B cell (primary cell): ENCODE measurements at regions of chr11 and their contacts with region 1.

Region 1: GRCh38 chr11:2298795-2299761 is 2.6 kb downstream of the C11orf21 start:
- DNase-seq: peak; percentile 52
- ATAC-seq: no peak
- H3K4me3 ChIP-seq: peak overlapping the region in 2 of 5 experiments; percentile 21 to 44
- H3K4me3 Mint-ChIP-seq: peak overlapping the region; percentile 50
- H3K27ac ChIP-seq: peak overlapping the region in 1 of 2 donors; percentile 37
- H3K27ac Mint-ChIP-seq: peak overlapping the region; percentile 88
- H3K4me1 ChIP-seq: peaks cover 51 to 57% of the 10 kb centered on the region in 2 donors
- H3K4me1 Mint-ChIP-seq: peaks cover 58% of the 10 kb centered on the region
- H3K27me3 ChIP-seq: no peaks in the 10 kb centered on the region
- H3K27me3 Mint-ChIP-seq: no peaks in the 10 kb centered on the region
- CTCF ChIP-seq: no peak

Region 2: DNA sequence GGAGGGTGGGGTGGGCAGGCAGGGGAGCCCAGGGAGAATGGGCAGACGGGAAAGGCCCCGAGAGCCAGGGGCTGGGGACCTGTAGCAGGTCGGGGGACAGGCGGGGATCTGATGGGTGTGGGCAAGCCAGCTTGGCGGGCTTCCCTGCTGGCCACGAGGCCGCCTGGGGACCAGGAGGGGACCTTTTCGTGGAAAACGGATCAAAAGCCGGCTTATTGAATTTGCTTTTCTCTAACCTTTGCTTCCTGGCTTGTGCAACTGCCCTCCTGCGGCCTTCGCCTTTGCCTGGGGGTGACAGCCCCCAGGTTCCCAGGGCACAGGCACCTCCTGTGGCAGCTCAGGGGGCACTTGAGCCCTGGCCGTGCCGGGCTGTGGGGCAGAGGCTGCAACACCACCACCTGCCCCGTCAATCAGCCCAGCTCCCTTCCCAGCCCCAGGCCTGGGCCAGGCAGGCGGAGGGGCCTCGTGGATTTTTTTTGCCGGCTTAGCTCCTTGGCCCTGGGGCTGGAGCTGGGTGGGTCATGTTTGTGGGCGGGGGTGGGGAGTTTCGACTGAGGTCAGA is 259.8 kb before region 1 on chr11:
- CTCF ChIA-PET with region 1: no interaction called
- POLR2A ChIA-PET with region 1: no interaction called
- intact Hi-C with region 1: no loop called
- DNase-seq: no peak
- ATAC-seq: no peak
- H3K4me3 ChIP-seq: no peak overlapping the region
- H3K4me3 Mint-ChIP-seq: no peak overlapping the region
- H3K27ac ChIP-seq: no peak overlapping the region
- H3K27ac Mint-ChIP-seq: no peak overlapping the region
- H3K4me1 ChIP-seq: no peaks in the 10 kb centered on the region
- H3K4me1 Mint-ChIP-seq: no peaks in the 10 kb centered on the region
- H3K27me3 ChIP-seq: no peaks in the 10 kb centered on the region
- H3K27me3 Mint-ChIP-seq: no peaks in the 10 kb centered on the region
- CTCF ChIP-seq: no peak

Region 3: GRCh38 chr11:2196970-2197770 is 101.9 kb before region 1 on chr11:
- CTCF ChIA-PET with region 1: interaction called, 68 read pairs
- POLR2A ChIA-PET with region 1: interaction called, 3 read pairs
- intact Hi-C with region 1: loop called (anchors 1 kb)
- DNase-seq: peak; percentile 79
- ATAC-seq: peak; percentile 92
- H3K4me3 ChIP-seq: no peak overlapping the region
- H3K4me3 Mint-ChIP-seq: no peak overlapping the region
- H3K27ac ChIP-seq: no peak overlapping the region
- H3K27ac Mint-ChIP-seq: peak overlapping the region; percentile 34
- H3K4me1 ChIP-seq: peaks cover 0 to 18% of the 10 kb centered on the region in 2 donors
- H3K4me1 Mint-ChIP-seq: peaks cover 7% of the 10 kb centered on the region
- H3K27me3 ChIP-seq: peaks cover 0 to 11% (median 2%) of the 10 kb centered on the region in 4 experiments
- H3K27me3 Mint-ChIP-seq: peaks cover 14% of the 10 kb centered on the region
- CTCF ChIP-seq: peak; percentile 78

Region 4: DNA sequence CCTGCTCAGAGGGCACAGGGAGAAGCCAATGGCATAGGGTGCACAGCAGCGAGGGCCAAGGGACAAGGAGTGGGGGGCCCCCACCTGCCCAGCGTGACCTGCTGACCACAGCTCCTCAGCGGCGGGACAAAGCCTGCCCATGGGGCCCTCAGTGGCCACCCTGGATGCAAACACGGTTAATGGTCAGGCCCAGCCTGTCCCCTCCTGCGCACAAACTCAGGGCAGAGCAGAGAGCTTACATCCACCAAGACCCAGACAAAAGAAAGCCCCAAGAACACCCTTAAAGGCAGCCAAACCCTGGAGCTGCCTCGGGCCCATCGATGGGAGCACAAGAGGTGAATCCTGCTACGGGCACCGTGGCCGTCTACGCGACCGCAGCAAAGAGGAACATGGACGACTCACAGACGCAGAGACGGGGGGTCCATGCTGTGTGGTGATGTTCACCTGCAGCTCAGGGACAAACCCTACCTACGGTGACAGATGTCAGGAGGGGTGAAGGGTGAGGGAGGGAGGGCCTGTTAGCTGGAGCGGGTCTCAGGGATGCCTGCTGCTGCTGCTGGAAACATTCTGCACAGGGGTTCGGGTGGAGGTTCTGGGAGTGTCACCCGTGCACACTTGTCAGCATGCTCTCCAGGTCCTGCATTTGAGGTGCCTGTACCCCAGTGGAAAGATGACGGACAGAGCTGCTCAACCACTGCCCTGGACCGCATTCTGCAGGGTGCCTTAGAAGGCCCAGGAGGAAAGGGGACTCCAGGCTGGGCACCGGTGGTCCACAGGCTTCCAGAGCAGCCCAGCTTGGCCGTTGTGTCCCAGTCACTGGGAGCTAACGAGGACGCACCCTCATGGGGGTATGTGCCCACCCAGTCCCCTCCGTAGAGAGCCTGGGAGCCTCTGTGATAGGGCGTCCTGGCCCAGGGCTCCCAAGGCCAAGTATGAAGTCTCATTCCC is 40.3 kb before region 1 on chr11:
- CTCF ChIA-PET with region 1: no interaction called
- POLR2A ChIA-PET with region 1: no interaction called
- intact Hi-C with region 1: no loop called
- DNase-seq: no peak
- ATAC-seq: no peak
- H3K4me3 ChIP-seq: no peak overlapping the region
- H3K4me3 Mint-ChIP-seq: no peak overlapping the region
- H3K27ac ChIP-seq: no peak overlapping the region
- H3K27ac Mint-ChIP-seq: peak overlapping the region; percentile 41
- H3K4me1 ChIP-seq: no peaks in the 10 kb centered on the region
- H3K4me1 Mint-ChIP-seq: no peaks in the 10 kb centered on the region
- H3K27me3 ChIP-seq: no peaks in the 10 kb centered on the region
- H3K27me3 Mint-ChIP-seq: no peaks in the 10 kb centered on the region
- CTCF ChIP-seq: no peak

Region 5: DNA sequence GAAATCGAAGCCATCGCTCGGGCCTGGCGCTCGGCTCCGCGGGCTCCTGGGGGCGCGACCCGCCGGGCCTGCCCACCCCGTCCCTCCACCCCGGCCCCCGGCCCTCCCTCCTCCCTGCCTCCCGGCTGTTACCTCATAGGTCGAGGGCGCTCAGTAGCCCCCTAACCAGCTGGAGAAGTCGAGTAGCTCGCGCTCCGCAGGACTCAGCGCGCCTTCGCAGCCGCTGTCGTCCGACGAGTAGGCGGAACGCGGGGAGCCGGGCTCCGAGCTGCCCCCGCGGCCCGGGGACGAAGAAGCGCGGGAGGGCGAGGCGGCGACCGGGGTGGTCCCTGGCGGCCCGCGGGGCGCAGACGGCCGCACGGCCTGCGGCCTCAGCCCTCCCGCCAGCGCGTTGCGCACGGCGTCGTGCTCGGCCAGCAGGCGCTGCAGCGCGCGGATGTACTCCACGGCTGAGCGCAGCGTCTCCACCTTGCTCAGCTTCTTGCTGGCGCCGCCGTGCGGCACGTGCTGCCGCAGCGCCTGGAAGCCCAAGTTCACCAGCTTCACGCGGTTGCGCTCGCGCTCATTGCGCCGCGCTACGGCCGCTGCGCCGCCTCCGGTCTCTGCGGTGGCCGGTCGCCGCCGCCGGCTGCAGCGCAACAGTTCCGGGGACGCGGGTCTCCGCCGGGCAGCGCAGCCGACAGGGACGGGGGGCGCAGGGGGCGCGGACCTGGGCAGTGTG is 29.3 kb before region 1 on chr11:
- CTCF ChIA-PET with region 1: interaction called, 12 read pairs
- POLR2A ChIA-PET with region 1: interaction called, 3 read pairs
- intact Hi-C with region 1: loop called (anchors 1 kb)
- DNase-seq: peak; percentile 80
- ATAC-seq: peak; percentile 34
- H3K4me3 ChIP-seq: peak overlapping the region; percentile 31 to 75 (median 52)
- H3K4me3 Mint-ChIP-seq: peak overlapping the region; percentile 84
- H3K27ac ChIP-seq: no peak overlapping the region
- H3K27ac Mint-ChIP-seq: peak overlapping the region; percentile 84
- H3K4me1 ChIP-seq: peaks cover 38 to 48% of the 10 kb centered on the region in 2 donors
- H3K4me1 Mint-ChIP-seq: peaks cover 41% of the 10 kb centered on the region
- H3K27me3 ChIP-seq: peaks cover 0 to 31% (median 9%) of the 10 kb centered on the region in 4 experiments
- H3K27me3 Mint-ChIP-seq: peaks cover 2% of the 10 kb centered on the region
- CTCF ChIP-seq: peak; percentile 36

Region 6: GRCh38 chr11:2377511-2378443 is 78.7 kb after region 1 on chr11:
- CTCF ChIA-PET with region 1: interaction called, 59 read pairs
- POLR2A ChIA-PET with region 1: interaction called, 11 read pairs
- intact Hi-C with region 1: loop called (anchors 2 kb)
- DNase-seq: peak; percentile 73
- ATAC-seq: peak; percentile 42
- H3K4me3 ChIP-seq: peak overlapping the region; percentile 9 to 92 (median 79)
- H3K4me3 Mint-ChIP-seq: peak overlapping the region; percentile 89
- H3K27ac ChIP-seq: peak overlapping the region; percentile 50 to 86
- H3K27ac Mint-ChIP-seq: peak overlapping the region; percentile 82
- H3K4me1 ChIP-seq: peaks cover 50 to 55% of the 10 kb centered on the region in 2 donors
- H3K4me1 Mint-ChIP-seq: peaks cover 48% of the 10 kb centered on the region
- H3K27me3 ChIP-seq: no peaks in the 10 kb centered on the region
- H3K27me3 Mint-ChIP-seq: no peaks in the 10 kb centered on the region
- CTCF ChIP-seq: no peak

Region 7: GRCh38 chr11:2400069-2400760 is 101.1 kb after region 1 on chr11 and contains the start of gene TSSC4:
- CTCF ChIA-PET with region 1: interaction called, 78 read pairs
- POLR2A ChIA-PET with region 1: interaction called, 10 read pairs
- intact Hi-C with region 1: no loop called
- DNase-seq: peak; percentile 100
- ATAC-seq: peak; percentile 81
- H3K4me3 ChIP-seq: peak within 1 kb of the TSS; percentile 87 to 100 (median 95)
- H3K4me3 Mint-ChIP-seq: peak within 1 kb of the TSS; percentile 90
- H3K27ac ChIP-seq: peak within 1 kb of the TSS; percentile 91 to 93
- H3K27ac Mint-ChIP-seq: peak within 1 kb of the TSS; percentile 98
- H3K4me1 ChIP-seq: peaks cover 26 to 40% of the 10 kb centered on the region in 2 donors
- H3K4me1 Mint-ChIP-seq: peaks cover 25% of the 10 kb centered on the region
- H3K27me3 ChIP-seq: no peaks in the 10 kb centered on the region
- H3K27me3 Mint-ChIP-seq: no peaks in the 10 kb centered on the region
- CTCF ChIP-seq: peak; percentile 94
- total RNA-seq, gene TSSC4: 57.5 and 59.5 TPM in 2 replicates

Region 8: DNA sequence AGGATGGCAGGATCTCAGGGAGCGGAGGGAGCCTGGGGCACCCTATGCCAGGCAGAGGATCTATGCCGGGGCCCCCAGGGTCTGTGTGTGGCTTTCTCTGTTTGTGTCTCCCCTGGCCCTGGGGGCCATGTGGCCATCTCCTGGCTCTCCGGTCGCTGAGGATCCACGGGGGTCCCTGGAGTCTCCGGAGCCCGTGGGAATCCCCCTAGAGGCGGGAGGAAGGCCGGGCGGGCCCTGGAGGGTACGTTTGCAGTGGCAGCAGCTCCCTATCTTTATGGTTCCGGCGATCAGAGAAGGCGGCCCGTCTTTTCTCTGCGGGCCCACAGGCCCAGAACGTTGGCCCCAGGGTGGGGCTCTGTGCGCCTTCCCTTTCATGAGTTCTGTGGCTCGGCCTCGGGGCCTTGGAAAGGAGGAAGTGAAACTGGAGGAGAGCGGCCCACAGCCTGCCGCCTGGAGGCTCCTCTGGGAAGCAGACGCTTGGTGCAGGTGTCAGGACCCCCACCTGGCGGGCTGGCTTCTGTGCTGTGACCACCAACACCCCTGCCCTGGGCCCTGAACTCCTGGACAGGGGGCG is 227.8 kb after region 1 on chr11:
- CTCF ChIA-PET with region 1: interaction called, 17 read pairs
- POLR2A ChIA-PET with region 1: no interaction called
- intact Hi-C with region 1: loop called (anchors 5 kb)
- DNase-seq: peak; percentile 89
- ATAC-seq: peak; percentile 91
- H3K4me3 ChIP-seq: peak overlapping the region in 4 of 5 experiments; percentile 14 to 57 (median 36)
- H3K4me3 Mint-ChIP-seq: peak overlapping the region; percentile 83
- H3K27ac ChIP-seq: peak overlapping the region; percentile 66 to 72
- H3K27ac Mint-ChIP-seq: peak overlapping the region; percentile 91
- H3K4me1 ChIP-seq: peaks cover 25 to 41% of the 10 kb centered on the region in 2 donors
- H3K4me1 Mint-ChIP-seq: peaks cover 45% of the 10 kb centered on the region
- H3K27me3 ChIP-seq: no peaks in the 10 kb centered on the region
- H3K27me3 Mint-ChIP-seq: no peaks in the 10 kb centered on the region
- CTCF ChIP-seq: peak; percentile 61